ENCODE measurements at regions of chr2 and their contacts with region 1.

Region 1: DNA sequence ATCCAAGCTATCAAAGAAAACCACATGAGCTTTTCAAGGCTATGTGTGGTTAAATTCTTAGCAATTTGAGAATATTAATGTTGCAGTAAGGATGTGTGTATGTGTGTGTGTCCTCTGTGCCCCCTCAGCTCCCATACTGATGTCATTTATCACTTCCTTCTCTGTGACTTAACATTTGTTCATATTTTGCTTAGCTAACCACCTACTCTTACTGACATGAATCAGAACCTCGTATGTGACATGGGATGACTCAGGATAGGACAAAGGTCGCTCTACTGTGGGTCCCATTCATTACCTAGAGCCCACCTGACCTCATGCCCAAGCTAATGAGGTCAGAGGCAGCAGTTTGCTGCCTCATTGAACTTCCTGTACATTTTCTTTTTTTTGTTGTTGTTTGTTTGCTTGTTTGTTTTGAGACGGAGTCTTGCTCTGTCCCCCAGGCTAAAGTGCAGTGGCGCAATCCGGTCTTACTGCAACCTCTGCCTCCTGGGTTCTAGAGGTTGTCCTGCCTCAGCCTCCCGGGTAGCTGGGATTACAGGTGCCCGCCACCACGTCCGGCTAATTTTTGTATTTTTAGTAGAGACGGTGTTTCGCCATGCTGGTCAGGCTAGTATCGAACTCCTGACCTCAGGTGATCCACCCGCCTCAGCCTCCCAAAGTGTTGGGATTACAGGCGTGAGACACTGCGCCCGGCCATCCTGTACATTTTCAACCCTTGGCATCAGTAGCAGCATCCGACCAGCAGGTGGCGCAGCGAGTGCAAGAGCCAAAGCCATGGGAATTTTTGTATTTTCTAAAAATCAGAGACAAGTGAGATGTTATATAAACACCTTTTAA is 36.4 kb downstream of the MOGAT1 start:
- DNase-seq: peak; percentile 80 to 93 (median 91)
- ATAC-seq: peak; percentile 66 to 67
- H3K4me3 ChIP-seq: no peak overlapping the region
- H3K27ac ChIP-seq: no peak overlapping the region
- H3K4me1 ChIP-seq: peaks cover 5% of the 10 kb centered on the region
- H3K27me3 ChIP-seq: no peaks in the 10 kb centered on the region

Region 2: GRCh38 chr2:222613715-222614331 is 94.1 kb before region 1 on chr2:
- intact Hi-C with region 1: no loop called
- DNase-seq: no peak
- ATAC-seq: peak; percentile 47 to 68
- H3K4me3 ChIP-seq: no peak overlapping the region
- H3K27ac ChIP-seq: no peak overlapping the region
- H3K4me1 ChIP-seq: no peaks in the 10 kb centered on the region
- H3K27me3 ChIP-seq: no peaks in the 10 kb centered on the region

Region 3: DNA sequence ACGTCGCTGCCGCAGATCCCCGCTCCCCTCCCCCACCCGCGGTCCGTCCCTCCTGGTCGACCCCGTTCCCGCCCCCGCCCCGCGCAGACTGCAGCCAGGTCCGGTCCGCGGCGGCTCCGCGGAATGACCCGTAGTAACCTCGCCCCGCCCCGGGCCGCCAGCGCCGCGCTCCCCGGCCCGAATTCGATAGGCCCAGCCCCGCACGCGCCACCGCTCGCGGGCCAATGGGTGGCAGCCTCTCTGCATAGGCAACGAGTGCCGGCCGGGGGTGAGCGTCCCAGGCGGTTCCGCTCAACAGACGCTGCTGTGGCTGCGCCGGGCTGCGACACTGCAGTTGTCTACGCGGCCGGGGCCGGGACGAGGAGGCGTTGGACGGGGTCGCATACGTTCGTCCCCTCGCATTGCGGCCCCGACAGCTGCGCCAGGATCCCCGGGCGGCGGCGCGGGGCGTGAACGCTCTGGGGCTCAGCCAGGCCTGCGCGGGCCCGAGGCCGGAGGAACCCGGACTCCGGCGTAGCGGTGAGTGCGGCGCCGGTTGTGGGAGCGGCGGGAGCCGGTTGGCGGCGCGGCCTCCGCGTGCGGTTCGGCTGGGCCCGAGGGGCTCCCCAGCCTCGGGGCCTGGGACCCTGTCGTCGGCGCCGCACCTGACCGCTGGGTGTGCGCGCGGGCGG is 153.0 kb after region 1 on chr2 and contains the start of gene ACSL3:
- intact Hi-C with region 1: loop called in 2 of 4 experiments (anchors 2 to 10 kb)
- DNase-seq: peak; percentile 97 to 99 (median 99)
- ATAC-seq: peak; percentile 98 to 99
- H3K4me3 ChIP-seq: peak within 1 kb of the TSS; percentile 87
- H3K27ac ChIP-seq: peak within 1 kb of the TSS; percentile 81
- H3K4me1 ChIP-seq: peaks cover 8% of the 10 kb centered on the region
- H3K27me3 ChIP-seq: no peaks in the 10 kb centered on the region
- total RNA-seq, gene ACSL3: 35.2 to 50.4 (median 36.6) TPM

Region 4: DNA sequence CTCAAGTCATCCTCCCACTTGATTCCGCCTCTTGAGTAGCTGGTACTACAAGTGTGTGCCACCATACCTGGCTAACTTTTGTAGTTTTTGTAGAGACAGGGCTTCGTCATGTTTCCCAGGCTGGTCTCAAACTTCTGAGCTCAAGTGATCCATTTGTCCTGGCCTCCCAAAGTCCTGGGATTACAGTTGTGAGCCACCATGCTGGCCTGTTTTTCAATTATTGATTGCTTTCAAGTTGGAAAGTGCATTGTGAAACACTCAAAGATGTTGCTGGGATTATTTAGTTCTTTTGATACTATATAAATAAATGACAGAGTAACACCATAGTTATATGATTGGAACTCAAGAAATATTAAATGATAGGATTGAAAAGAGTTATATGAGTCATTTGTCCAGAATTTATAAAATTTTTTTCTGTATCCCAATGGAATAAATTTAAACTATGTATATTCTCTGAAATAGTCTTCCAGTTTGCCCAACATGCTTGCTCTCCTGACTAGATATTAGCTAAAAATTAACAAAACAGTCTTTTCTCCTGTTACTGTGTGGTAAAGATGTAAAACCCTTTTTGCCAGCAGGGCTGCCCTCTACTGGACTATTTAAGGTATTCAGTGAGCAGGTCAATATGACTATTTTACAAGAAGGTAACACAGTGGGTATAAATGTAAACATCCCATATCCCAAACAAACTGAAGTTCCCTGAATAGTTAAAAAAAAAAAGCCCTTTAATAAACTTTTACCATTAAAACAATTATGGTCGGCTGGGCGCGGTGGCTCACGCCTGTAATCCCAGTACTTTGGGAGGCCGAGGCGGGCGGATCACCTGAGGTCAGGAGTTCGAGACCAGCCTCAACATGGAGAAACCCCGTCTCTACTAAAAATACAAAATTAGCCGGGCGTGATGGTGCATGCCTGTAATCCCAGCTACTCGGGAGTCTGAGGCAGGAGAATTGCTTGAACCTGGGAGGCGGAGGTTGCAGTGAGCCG is 195.6 kb after region 1 on chr2:
- intact Hi-C with region 1: loop called (anchors 5 kb)
- DNase-seq: peak in 1 of 3 donors; percentile 46
- ATAC-seq: peak; percentile 58 to 65
- H3K4me3 ChIP-seq: no peak overlapping the region
- H3K27ac ChIP-seq: no peak overlapping the region
- H3K4me1 ChIP-seq: peaks cover 5% of the 10 kb centered on the region
- H3K27me3 ChIP-seq: no peaks in the 10 kb centered on the region

Measured in right cardiac atrium (tissue), 5 donors.